ENCODE measurements at regions of chr16 and their contacts with region 1.

Region 1: GRCh38 chr16:75198135-75198600 is 8.8 kb downstream of the CTRB2 start:
- DNase-seq: no peak
- ATAC-seq: no peak
- H3K4me3 Mint-ChIP-seq: no peak overlapping the region
- H3K27ac Mint-ChIP-seq: no peak overlapping the region
- H3K4me1 Mint-ChIP-seq: peaks cover 25% of the 10 kb centered on the region
- H3K27me3 Mint-ChIP-seq: peaks cover 24% of the 10 kb centered on the region

Region 2: GRCh38 chr16:75227361-75228142 is 29.4 kb after region 1 on chr16:
- CTCF ChIA-PET with region 1: interaction called, 63 read pairs
- POLR2A ChIA-PET with region 1: no interaction called
- DNase-seq: no peak
- ATAC-seq: no peak
- H3K4me3 Mint-ChIP-seq: no peak overlapping the region
- H3K27ac Mint-ChIP-seq: no peak overlapping the region
- H3K4me1 Mint-ChIP-seq: no peaks in the 10 kb centered on the region
- H3K27me3 Mint-ChIP-seq: peaks cover 2% of the 10 kb centered on the region

Region 3: DNA sequence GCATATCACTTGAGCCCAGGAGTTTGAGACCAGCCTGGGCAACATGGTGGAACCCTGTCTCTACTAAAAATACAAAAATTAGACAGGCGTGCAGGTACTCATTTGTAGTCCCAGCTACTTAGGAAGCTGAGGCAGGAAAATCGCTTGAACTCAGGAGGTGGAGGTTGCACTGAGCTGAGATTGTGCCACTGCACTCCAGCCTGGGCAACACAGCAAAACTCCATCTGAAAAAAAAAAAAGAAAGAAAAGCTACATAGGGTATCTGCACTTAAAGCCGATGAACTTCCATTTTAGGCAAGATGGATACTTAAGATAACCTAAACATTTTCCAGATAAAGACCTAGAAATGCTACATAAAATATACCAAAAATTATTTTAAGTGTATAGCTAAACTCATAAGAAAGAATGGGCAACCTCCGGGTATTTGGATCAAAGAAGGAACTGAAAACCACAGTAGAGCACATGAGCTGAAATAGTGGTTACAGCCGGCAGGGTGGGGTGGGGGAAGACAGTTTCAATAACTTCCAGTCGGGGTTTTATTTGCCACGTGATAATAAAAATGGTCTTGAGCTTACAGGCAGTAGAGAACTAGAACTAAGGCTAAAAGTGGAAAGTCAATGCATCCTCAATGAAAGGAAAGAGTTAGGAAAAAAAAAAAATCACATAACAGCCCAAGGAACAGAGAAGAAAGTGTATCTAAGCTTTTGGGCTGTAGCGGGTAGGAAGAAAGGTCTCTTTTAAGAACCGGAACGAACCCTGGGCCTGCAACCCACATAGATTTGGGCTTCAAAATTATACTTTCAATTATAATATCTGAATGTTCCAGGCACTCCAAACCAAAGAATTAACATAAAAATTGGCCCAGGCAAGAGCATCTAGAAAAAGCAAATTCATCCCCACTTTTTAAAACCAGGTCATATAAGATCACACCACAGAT is 182.0 kb after region 1 on chr16:
- CTCF ChIA-PET with region 1: interaction called, 46 read pairs
- POLR2A ChIA-PET with region 1: no interaction called
- DNase-seq: peak; percentile 71
- ATAC-seq: peak; percentile 91
- H3K4me3 Mint-ChIP-seq: peak overlapping the region; percentile 56
- H3K27ac Mint-ChIP-seq: peak overlapping the region; percentile 58
- H3K4me1 Mint-ChIP-seq: peaks cover 29% of the 10 kb centered on the region
- H3K27me3 Mint-ChIP-seq: peaks cover 34% of the 10 kb centered on the region

Region 4: DNA sequence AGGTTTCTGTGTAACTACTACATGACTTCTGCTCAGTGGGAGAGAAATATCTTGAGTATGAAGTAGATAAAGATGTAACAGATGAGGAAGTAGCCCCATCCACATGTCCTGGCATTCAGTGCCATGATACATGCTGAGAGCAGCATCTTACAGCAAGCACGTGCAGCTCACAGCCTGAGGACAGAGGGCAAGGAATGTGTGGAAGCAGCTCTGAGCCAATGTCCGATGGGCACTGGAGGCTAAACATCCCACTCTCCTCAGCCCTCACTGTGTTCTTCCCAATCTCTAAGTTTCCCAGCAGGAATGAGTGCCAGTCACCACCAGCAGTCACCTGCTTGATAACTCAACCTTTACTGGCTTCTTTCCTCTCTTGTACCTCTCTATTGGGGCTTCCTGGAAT is 194.7 kb after region 1 on chr16:
- CTCF ChIA-PET with region 1: interaction called, 26 read pairs
- POLR2A ChIA-PET with region 1: no interaction called
- DNase-seq: no peak
- ATAC-seq: no peak
- H3K4me3 Mint-ChIP-seq: no peak overlapping the region
- H3K27ac Mint-ChIP-seq: no peak overlapping the region
- H3K4me1 Mint-ChIP-seq: no peaks in the 10 kb centered on the region
- H3K27me3 Mint-ChIP-seq: no peaks in the 10 kb centered on the region

Region 5: GRCh38 chr16:75443298-75443697 is 245.1 kb after region 1 on chr16:
- CTCF ChIA-PET with region 1: no interaction called
- POLR2A ChIA-PET with region 1: no interaction called
- DNase-seq: no peak
- ATAC-seq: no peak
- H3K4me3 Mint-ChIP-seq: no peak overlapping the region
- H3K27ac Mint-ChIP-seq: no peak overlapping the region
- H3K4me1 Mint-ChIP-seq: no peaks in the 10 kb centered on the region
- H3K27me3 Mint-ChIP-seq: no peaks in the 10 kb centered on the region

Region 6: DNA sequence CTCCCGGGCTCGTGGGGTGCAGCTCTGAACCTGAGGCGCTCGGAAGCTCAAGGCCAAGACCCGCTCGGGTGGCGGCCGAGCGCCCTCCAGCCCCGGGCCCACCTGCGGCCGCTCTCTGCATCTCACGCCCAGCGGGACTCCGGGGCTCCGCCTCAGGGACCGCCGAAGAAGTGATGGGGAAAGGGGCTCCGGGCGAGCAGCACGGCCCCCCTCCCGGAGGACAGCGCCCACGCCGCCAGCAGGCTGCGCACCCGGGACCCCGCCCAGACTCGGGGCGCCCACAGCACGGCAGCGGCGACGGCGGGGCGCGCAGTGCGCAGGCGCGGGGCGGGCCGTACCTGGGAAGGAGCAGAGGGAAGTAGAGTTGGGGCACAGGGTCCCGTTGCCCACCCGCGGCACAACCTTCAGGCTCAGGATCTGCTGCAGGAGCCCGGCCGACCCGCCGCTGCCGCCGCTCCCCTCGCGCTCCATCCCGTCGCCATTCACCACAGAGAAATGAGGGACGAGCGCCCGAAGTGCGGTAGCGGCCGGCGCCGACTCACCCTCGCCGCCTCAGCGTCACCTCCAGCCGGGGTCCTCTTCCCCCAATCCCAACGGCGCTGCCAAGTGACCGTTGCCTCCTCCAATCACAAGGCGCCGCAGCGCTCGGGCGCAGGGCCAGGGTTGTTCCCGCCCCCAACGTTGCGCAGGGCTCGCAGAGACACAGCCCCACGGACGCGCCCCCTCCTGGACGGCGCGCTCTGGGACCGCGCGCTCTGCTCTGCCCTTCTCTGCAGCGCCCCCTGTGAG is 266.2 kb after region 1 on chr16 and contains the start of gene TMEM170A:
- CTCF ChIA-PET with region 1: interaction called, 31 read pairs
- POLR2A ChIA-PET with region 1: no interaction called
- DNase-seq: peak; percentile 99
- ATAC-seq: peak; percentile 97
- H3K4me3 Mint-ChIP-seq: peak within 1 kb of the TSS; percentile 96
- H3K27ac Mint-ChIP-seq: peak within 1 kb of the TSS; percentile 93
- H3K4me1 Mint-ChIP-seq: peaks cover 42% of the 10 kb centered on the region
- H3K27me3 Mint-ChIP-seq: no peaks in the 10 kb centered on the region
- total RNA-seq, gene TMEM170A: 30.2 to 31.1 TPM

Measured in activated CD8-positive, alpha-beta T cell treated with anti-CD3 and anti-CD28 coated beads, Interleukin-2, amount 10 ng/mL, durations not matched to agents 7 days and 5 days (primary cell).